Activated CD4-positive, alpha-beta T cell treated with anti-CD3 and anti-CD28 coated beads for 36 hours (primary cell): ENCODE measurements at regions of chr2 and their contacts with region 1.

Region 1: GRCh38 chr2:200509612-200510433 is at the start of gene KCTD18:
- DNase-seq: peak; percentile 94
- ATAC-seq: peak; percentile 98
- H3K4me3 Mint-ChIP-seq: peak within 1 kb of the TSS; percentile 85
- H3K27ac Mint-ChIP-seq: peak within 1 kb of the TSS; percentile 92
- H3K4me1 Mint-ChIP-seq: peaks cover 30% of the 10 kb centered on the region
- H3K27me3 Mint-ChIP-seq: no peaks in the 10 kb centered on the region
- total RNA-seq, gene KCTD18: 15.9 to 17.4 TPM

Region 2: GRCh38 chr2:200525882-200526651 is 16.2 kb after region 1 on chr2 and contains the start of gene SGO2:
- CTCF ChIA-PET with region 1: interaction called, 22 read pairs
- POLR2A ChIA-PET with region 1: interaction called, 3 read pairs
- intact Hi-C with region 1: loop called (anchors 1 kb)
- DNase-seq: peak; percentile 98
- ATAC-seq: peak; percentile 99
- H3K4me3 Mint-ChIP-seq: peak within 1 kb of the TSS; percentile 97
- H3K27ac Mint-ChIP-seq: peak within 1 kb of the TSS; percentile 90
- H3K4me1 Mint-ChIP-seq: peaks cover 23% of the 10 kb centered on the region
- H3K27me3 Mint-ChIP-seq: no peaks in the 10 kb centered on the region
- total RNA-seq, gene SGO2: 49.9 to 56.7 TPM